WTC11 (cell line): ENCODE measurements at regions of chr15 and their contacts with region 1.

Region 1: DNA sequence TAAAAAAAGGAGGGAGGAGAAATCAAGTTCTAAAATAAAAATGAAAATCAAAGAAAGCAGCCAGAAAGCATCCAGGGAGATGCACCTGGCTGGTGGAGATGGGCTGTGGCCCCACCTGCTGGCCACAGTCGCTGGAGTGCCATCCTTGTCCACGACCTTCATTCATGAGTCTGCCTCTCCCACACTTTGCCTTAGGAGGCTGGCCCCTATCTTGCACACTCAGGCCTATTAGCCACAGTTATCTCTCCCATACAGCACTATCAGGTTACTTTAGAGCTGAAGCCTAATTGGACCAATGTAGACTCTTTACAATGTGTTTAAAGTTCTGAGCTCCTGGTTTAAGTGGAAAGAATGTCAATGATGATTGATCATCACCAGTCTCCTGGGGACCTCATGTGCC is 392.0 kb upstream of the RORA start:
- DNase-seq: peak; percentile 57
- ATAC-seq: peak; percentile 95
- H3K4me3 Mint-ChIP-seq: no peak overlapping the region
- H3K27ac Mint-ChIP-seq: no peak overlapping the region
- H3K4me1 Mint-ChIP-seq: peaks cover 10% of the 10 kb centered on the region
- H3K27me3 Mint-ChIP-seq: no peaks in the 10 kb centered on the region
- CTCF ChIP-seq: peak; percentile 65

Region 2: GRCh38 chr15:61530779-61531178 is 90.4 kb before region 1 on chr15:
- CTCF ChIA-PET with region 1: interaction called, 16 read pairs
- POLR2A ChIA-PET with region 1: no interaction called
- DNase-seq: peak; percentile 35
- ATAC-seq: peak; percentile 84
- H3K4me3 Mint-ChIP-seq: no peak overlapping the region
- H3K27ac Mint-ChIP-seq: no peak overlapping the region
- H3K4me1 Mint-ChIP-seq: peaks cover 18% of the 10 kb centered on the region
- H3K27me3 Mint-ChIP-seq: no peaks in the 10 kb centered on the region
- CTCF ChIP-seq: no peak

Region 3: DNA sequence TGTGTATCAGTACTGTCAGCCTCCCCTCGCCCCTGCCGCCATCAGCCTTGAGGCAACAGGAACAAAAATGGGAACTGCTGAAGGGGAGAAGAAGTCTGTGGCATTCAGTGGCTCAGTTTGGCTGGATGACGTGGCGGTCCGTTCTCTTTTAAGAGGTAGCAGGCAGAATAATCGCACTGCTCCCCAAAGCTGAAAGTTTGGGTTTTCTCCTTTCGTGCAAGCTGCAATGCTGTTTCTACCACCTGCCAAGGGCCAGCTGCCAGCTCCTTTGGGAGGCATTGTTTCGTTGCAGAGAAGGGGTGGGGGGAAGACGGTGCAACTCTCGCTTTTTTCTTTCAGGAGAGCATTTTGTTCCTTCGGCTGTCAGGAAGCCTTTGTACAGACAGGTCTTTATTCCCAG is 22.5 kb before region 1 on chr15:
- CTCF ChIA-PET with region 1: no interaction called
- POLR2A ChIA-PET with region 1: no interaction called
- DNase-seq: no peak
- ATAC-seq: no peak
- H3K4me3 Mint-ChIP-seq: no peak overlapping the region
- H3K27ac Mint-ChIP-seq: no peak overlapping the region
- H3K4me1 Mint-ChIP-seq: peaks cover 12% of the 10 kb centered on the region
- H3K27me3 Mint-ChIP-seq: no peaks in the 10 kb centered on the region
- CTCF ChIP-seq: no peak

Region 4: DNA sequence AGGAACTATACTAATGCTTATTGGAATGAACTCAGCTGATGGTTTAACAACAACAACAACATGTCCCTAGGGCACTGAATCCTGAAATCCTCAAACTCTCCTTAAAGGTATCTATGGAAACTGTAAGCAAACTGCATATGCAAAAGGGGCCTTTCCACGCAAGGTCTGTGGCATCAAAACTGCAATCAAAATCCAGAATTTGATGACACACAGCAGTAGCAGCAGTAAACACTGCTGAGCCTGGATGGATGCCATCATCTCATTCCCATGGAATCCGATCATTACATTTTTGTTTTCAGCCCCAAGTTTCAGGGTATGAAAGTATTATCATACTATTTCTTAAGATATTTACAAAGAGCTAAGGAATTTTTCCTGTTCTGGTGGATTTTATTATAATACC is 39.4 kb after region 1 on chr15:
- CTCF ChIA-PET with region 1: no interaction called
- POLR2A ChIA-PET with region 1: no interaction called
- DNase-seq: no peak
- ATAC-seq: no peak
- H3K4me3 Mint-ChIP-seq: no peak overlapping the region
- H3K27ac Mint-ChIP-seq: no peak overlapping the region
- H3K4me1 Mint-ChIP-seq: peaks cover 7% of the 10 kb centered on the region
- H3K27me3 Mint-ChIP-seq: no peaks in the 10 kb centered on the region
- CTCF ChIP-seq: no peak

Region 5: DNA sequence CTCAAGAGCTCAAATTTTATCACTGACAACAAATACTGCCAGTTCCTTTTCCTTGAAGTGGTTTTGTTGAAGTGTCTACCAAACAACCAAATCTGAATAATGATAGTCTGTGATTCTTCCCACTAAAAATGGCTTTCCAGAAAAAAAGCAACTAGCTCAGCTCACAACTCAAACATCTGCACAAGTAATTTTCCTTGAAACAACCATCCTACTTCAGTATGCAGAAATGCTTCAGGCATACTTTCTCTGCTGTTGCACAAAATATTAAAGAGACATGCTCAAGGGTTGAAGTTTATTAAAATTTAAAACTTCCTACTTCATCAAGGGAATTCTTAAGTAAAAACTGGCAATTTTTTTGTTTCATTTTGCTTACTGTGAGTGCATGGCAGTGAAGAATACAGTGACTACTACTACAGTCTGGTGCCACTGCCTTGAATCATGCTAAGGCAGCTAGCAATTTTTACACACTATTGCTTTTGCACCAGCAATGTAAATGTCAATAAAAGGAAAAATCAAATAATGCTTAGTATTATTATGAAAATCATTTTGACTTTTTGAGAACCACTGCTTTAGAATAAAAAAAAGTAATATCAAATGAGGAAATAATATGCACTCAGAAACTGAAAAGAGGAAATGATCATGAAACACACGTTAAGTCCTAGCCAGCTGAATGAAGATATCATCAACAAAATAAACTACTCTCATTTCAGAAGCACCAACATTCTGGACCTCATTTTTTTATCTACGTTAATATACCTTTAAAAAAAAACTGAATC is 405.5 kb after region 1 on chr15:
- CTCF ChIA-PET with region 1: no interaction called
- POLR2A ChIA-PET with region 1: no interaction called
- DNase-seq: no peak
- ATAC-seq: no peak
- H3K4me3 Mint-ChIP-seq: no peak overlapping the region
- H3K27ac Mint-ChIP-seq: no peak overlapping the region
- H3K4me1 Mint-ChIP-seq: no peaks in the 10 kb centered on the region
- H3K27me3 Mint-ChIP-seq: no peaks in the 10 kb centered on the region
- CTCF ChIP-seq: no peak